A673 (cell line): ENCODE measurements at regions of chr1 and their contacts with region 1.

Region 1: DNA sequence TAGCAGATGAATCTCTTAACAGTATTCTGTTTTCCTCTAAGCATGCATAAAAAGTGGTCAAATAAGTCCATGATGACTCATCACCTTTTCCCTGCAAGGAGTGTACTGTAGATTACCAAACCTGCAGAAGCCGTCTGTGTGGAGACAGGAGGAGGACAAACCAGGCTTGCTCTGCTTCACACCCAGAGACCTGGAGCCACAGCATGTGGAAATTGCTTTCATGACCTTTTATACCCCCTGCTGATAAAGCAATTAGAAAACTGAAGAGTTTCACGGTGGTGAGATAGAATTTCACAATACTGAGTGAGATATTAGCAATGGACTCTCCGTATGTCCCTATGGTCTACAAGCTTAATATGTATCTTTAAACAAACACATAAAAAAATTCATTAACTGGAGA is 9.3 kb downstream of the CORT start:
- DNase-seq: peak; percentile 51
- H3K4me3 ChIP-seq: no peak overlapping the region
- H3K27ac ChIP-seq: peak overlapping the region; percentile 18
- H3K4me1 ChIP-seq: peaks cover 19% of the 10 kb centered on the region
- H3K27me3 ChIP-seq: no peaks in the 10 kb centered on the region
- CTCF ChIP-seq: no peak

Region 2: GRCh38 chr1:10415211-10415930 is 43.8 kb before region 1 on chr1:
- CTCF ChIA-PET with region 1: no interaction called
- POLR2A ChIA-PET with region 1: interaction called, 12 read pairs
- intact Hi-C with region 1: no loop called
- DNase-seq: peak; percentile 76
- H3K4me3 ChIP-seq: no peak overlapping the region
- H3K27ac ChIP-seq: peak overlapping the region; percentile 73
- H3K4me1 ChIP-seq: peaks cover 10% of the 10 kb centered on the region
- H3K27me3 ChIP-seq: no peaks in the 10 kb centered on the region
- CTCF ChIP-seq: no peak

Region 3: GRCh38 chr1:10663678-10664035 is 204.5 kb after region 1 on chr1:
- CTCF ChIA-PET with region 1: no interaction called
- POLR2A ChIA-PET with region 1: no interaction called
- intact Hi-C with region 1: no loop called
- DNase-seq: no peak
- H3K4me3 ChIP-seq: no peak overlapping the region
- H3K27ac ChIP-seq: peak overlapping the region; percentile 61
- H3K4me1 ChIP-seq: peaks cover 5% of the 10 kb centered on the region
- H3K27me3 ChIP-seq: no peaks in the 10 kb centered on the region
- CTCF ChIP-seq: no peak

Region 4: DNA sequence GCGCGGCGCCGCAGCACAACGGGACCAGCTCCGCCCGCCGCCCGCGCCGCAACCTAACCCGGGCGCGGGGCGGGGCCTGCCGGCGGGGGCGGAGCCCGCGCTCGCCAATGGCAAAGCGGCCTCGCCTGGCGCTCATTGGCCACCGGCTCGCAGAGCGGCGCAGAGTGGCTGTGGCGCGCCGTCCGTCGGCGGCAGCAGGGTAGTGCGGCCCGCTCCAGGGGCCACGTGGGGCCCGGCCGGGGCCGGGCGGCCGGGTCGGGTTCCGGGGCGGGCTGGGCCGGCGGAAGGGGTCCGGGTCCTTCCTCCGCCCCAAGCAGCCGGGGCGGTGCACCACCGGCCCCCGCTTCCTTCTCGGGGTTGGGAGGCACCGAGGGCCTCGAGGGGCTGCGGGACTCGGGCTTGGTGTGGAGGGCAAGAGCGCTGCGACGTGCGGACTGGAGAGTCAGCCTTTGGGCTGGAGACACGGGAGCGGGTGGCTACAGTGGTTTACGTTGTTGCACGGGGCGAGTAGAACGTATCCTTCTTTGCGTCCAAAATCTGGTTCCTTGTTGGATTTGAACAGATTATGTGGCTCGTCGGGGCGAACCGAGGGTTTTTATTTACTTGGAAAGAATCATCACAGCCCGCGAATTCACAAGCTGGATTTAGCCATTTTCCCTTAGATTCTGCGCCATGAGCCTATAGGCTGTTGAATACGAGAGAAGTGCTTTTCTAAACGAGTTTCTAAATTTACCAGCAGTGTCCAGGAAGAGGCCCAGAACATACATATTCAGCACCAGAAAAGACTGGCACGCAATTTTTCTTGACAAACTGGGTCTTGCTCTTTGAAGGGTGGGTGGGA is 601.0 kb after region 1 on chr1 and contains the start of gene SRM:
- CTCF ChIA-PET with region 1: interaction called, 12 read pairs
- POLR2A ChIA-PET with region 1: no interaction called
- intact Hi-C with region 1: no loop called
- DNase-seq: peak; percentile 96
- H3K4me3 ChIP-seq: peak within 1 kb of the TSS; percentile 87
- H3K27ac ChIP-seq: peak within 1 kb of the TSS; percentile 78
- H3K4me1 ChIP-seq: peaks cover 4% of the 10 kb centered on the region
- H3K27me3 ChIP-seq: no peaks in the 10 kb centered on the region
- CTCF ChIP-seq: no peak
- total RNA-seq, gene SRM: 176 and 206 TPM in 2 replicates